B cell (primary cell): ENCODE measurements at regions of chr4 and their contacts with region 1.

Region 1: DNA sequence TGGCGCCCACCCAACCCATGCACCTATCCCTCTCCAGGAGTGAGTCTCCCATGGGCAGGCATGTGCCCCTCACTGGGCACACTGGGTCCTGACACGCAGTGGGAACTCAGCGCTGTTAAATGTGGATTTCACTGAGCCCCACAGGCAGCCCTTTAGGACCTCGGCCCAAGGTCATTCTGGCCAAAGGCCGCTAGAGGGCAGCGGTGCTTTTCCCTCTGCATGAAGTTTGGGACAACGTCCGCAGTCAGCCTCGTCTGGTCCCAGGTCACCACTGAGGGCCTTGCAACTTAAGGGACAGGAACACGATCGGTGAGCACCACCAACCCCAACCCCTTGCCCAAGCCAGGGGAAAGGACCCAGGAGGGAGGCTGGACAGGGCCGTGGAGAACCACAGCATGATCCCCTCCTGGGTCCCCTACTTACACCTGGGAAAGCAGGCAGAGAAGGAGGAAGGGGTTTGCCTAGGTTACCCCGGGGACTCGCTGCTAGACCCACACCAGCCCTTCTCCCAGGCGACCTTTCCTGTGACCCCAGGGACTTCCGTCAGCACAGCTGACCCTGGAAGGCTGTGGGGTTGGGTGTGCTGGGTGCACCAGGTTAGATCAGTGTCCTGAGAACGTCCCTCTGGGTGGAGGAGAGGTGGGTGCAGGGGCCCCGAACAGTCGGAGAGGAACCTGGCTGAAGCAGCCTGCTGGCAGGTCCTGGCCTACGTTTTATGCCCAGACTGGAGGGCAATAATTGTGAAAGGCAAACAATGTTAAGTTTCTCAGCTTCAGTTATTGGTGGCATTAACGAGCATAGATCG is 24.0 kb downstream of the CYTL1 start:
- DNase-seq: peak; percentile 68
- ATAC-seq: peak; percentile 65
- H3K4me3 ChIP-seq: no peak overlapping the region
- H3K4me3 Mint-ChIP-seq: no peak overlapping the region
- H3K27ac ChIP-seq: no peak overlapping the region
- H3K27ac Mint-ChIP-seq: peak overlapping the region; percentile 4
- H3K4me1 ChIP-seq: peaks cover 7 to 9% of the 10 kb centered on the region in 2 donors
- H3K4me1 Mint-ChIP-seq: peaks cover 14% of the 10 kb centered on the region
- H3K27me3 ChIP-seq: peaks cover 0 to 7% (median 3%) of the 10 kb centered on the region in 4 experiments
- H3K27me3 Mint-ChIP-seq: peaks cover 35% of the 10 kb centered on the region
- CTCF ChIP-seq: peak; percentile 86

Region 2: GRCh38 chr4:4901877-4902276 is 93.4 kb before region 1 on chr4:
- CTCF ChIA-PET with region 1: interaction called, 9 read pairs
- POLR2A ChIA-PET with region 1: no interaction called
- intact Hi-C with region 1: loop called (anchors 10 kb)
- DNase-seq: peak; percentile 42
- ATAC-seq: peak; percentile 31
- H3K4me3 ChIP-seq: no peak overlapping the region
- H3K4me3 Mint-ChIP-seq: no peak overlapping the region
- H3K27ac ChIP-seq: no peak overlapping the region
- H3K27ac Mint-ChIP-seq: no peak overlapping the region
- H3K4me1 ChIP-seq: no peaks in the 10 kb centered on the region
- H3K4me1 Mint-ChIP-seq: no peaks in the 10 kb centered on the region
- H3K27me3 ChIP-seq: peaks cover 0 to 2% (median 0%) of the 10 kb centered on the region in 4 experiments
- H3K27me3 Mint-ChIP-seq: peaks cover 18% of the 10 kb centered on the region
- CTCF ChIP-seq: peak; percentile 35

Region 3: GRCh38 chr4:4984186-4984585 is 11.1 kb before region 1 on chr4:
- CTCF ChIA-PET with region 1: no interaction called
- POLR2A ChIA-PET with region 1: no interaction called
- intact Hi-C with region 1: no loop called
- DNase-seq: no peak
- ATAC-seq: no peak
- H3K4me3 ChIP-seq: no peak overlapping the region
- H3K4me3 Mint-ChIP-seq: no peak overlapping the region
- H3K27ac ChIP-seq: no peak overlapping the region
- H3K27ac Mint-ChIP-seq: no peak overlapping the region
- H3K4me1 ChIP-seq: no peaks in the 10 kb centered on the region
- H3K4me1 Mint-ChIP-seq: no peaks in the 10 kb centered on the region
- H3K27me3 ChIP-seq: no peaks in the 10 kb centered on the region
- H3K27me3 Mint-ChIP-seq: peaks cover 2% of the 10 kb centered on the region
- CTCF ChIP-seq: no peak

Region 4: GRCh38 chr4:5055411-5055810 is 60.1 kb after region 1 on chr4:
- CTCF ChIA-PET with region 1: no interaction called
- POLR2A ChIA-PET with region 1: no interaction called
- intact Hi-C with region 1: no loop called
- DNase-seq: no peak
- ATAC-seq: no peak
- H3K4me3 ChIP-seq: no peak overlapping the region
- H3K4me3 Mint-ChIP-seq: no peak overlapping the region
- H3K27ac ChIP-seq: no peak overlapping the region
- H3K27ac Mint-ChIP-seq: no peak overlapping the region
- H3K4me1 ChIP-seq: peaks cover 10 to 16% of the 10 kb centered on the region in 2 donors
- H3K4me1 Mint-ChIP-seq: peaks cover 13% of the 10 kb centered on the region
- H3K27me3 ChIP-seq: peaks cover 0 to 25% (median 12%) of the 10 kb centered on the region in 4 experiments
- H3K27me3 Mint-ChIP-seq: peaks cover 30% of the 10 kb centered on the region
- CTCF ChIP-seq: no peak